ENCODE measurements at regions of chr2 and their contacts with region 1.

Region 1: DNA sequence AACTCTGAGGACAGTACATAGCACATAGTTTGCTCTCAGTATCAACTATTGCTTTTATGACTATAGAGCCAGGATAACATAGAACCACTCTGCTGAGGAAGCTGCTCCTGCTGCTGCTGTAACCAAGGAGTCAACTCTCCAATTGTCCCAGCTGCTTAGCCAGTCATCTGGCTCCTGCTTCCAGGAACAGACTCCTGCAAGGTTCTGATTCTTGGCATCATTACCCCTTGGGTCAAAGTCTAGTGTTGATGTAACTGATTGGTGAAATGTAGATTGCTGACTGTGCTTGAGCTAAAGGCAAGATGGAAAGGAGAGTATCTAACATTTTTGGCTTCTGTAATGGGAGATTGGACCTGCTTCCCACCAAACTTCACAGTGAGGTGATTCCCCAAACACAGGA is 261.9 kb upstream of the FSHR start:
- DNase-seq: no peak
- H3K4me3 ChIP-seq: no peak overlapping the region
- CTCF ChIP-seq: no peak

Region 2: DNA sequence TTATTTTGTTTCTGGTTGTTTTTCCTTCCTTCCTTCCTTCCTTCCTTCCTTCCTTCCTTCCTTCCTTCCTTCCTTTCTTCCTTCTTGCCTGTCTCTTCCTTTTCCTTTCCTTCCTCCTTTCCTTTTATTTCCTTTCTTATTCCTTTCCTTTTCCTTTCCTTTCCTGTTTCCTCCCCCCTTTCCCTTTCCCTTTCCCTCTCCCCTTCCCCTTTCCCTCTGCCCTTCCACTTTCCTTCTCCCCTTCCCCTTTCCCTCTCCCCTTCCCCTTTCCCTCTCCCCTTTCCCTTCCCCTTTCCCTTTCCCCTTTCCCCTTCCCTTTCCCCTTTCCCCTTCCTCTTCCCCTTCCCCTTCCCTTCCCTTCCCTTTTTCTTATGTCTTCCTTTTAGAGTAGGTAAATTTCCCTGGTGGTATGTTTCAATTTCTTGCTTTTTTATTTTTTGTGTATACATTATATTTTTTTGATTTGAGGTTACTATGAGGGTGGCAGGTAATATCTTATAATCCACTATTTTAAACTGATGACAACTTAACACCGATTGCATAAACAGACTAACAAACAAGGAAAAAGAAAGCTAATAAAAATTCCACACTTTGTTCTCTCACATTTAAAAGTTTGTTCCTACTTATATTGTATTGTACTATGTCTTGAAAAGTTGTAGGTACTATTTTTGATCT is 49.0 kb after region 1 on chr2:
- in situ Hi-C with region 1: loop called (anchors 5 kb)
- DNase-seq: no peak
- H3K4me3 ChIP-seq: no peak overlapping the region
- CTCF ChIP-seq: no peak

Measured in astrocyte of the cerebellum (primary cell).